ENCODE measurements at regions of chr22 and their contacts with region 1.

Region 1: GRCh38 chr22:46367707-46368191 is 32.2 kb downstream of the TRMU start:
- DNase-seq: peak; percentile 89
- ATAC-seq: peak; percentile 48
- H3K4me3 ChIP-seq: no peak overlapping the region
- H3K4me3 Mint-ChIP-seq: no peak overlapping the region
- H3K27ac ChIP-seq: no peak overlapping the region
- H3K27ac Mint-ChIP-seq: no peak overlapping the region
- H3K4me1 ChIP-seq: peaks cover 4 to 55% of the 10 kb centered on the region in 2 donors
- H3K4me1 Mint-ChIP-seq: peaks cover 15% of the 10 kb centered on the region
- H3K27me3 ChIP-seq: peaks cover 0 to 6% (median 0%) of the 10 kb centered on the region in 4 experiments
- H3K27me3 Mint-ChIP-seq: no peaks in the 10 kb centered on the region
- CTCF ChIP-seq: peak; percentile 93

Region 2: DNA sequence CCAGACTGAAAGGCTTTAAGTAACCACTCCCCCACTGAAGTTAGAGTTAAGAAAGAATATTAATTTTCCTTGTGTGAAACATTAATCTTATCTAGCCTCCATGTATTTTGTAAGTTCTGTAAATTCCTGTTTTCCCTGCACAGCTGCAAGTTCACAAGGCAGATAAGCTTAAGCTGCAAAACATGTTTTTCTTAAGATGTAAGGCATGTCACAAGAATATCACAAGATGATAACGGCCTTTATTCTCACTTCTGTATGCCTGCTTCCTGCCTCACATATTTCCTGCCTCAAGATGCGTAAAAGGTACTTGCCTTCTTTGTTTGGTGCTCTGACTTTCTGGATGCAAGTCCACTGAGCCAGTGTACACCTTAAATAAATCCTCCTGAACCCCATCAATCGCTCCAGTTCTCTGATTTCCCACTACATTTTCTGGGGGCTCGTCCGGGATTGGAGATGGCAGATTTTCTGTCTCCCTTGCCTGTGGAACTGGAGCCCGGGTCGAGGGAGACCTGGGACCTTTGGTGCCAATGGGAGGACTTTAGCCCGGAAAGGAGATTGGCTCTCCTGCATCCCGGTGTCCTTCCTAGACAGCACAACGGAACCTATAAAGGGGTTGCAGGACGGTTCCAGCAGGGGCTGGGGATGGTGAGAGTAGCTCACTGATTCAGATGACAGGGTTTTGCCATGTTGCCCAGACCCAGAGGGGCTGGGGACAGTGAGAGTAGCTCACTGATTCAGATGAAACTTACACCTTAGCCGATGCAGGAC is 187.2 kb before region 1 on chr22:
- CTCF ChIA-PET with region 1: no interaction called
- POLR2A ChIA-PET with region 1: no interaction called
- intact Hi-C with region 1: no loop called
- DNase-seq: no peak
- ATAC-seq: no peak
- H3K4me3 ChIP-seq: no peak overlapping the region
- H3K4me3 Mint-ChIP-seq: no peak overlapping the region
- H3K27ac ChIP-seq: no peak overlapping the region
- H3K27ac Mint-ChIP-seq: no peak overlapping the region
- H3K4me1 ChIP-seq: no peaks in the 10 kb centered on the region
- H3K4me1 Mint-ChIP-seq: no peaks in the 10 kb centered on the region
- H3K27me3 ChIP-seq: no peaks in the 10 kb centered on the region
- H3K27me3 Mint-ChIP-seq: no peaks in the 10 kb centered on the region
- CTCF ChIP-seq: no peak

Region 3: GRCh38 chr22:46355371-46355995 is 12.3 kb before region 1 on chr22:
- CTCF ChIA-PET with region 1: interaction called, 10 read pairs
- POLR2A ChIA-PET with region 1: no interaction called
- intact Hi-C with region 1: no loop called
- DNase-seq: peak; percentile 81
- ATAC-seq: peak; percentile 48
- H3K4me3 ChIP-seq: no peak overlapping the region
- H3K4me3 Mint-ChIP-seq: no peak overlapping the region
- H3K27ac ChIP-seq: no peak overlapping the region
- H3K27ac Mint-ChIP-seq: peak overlapping the region; percentile 65
- H3K4me1 ChIP-seq: peaks cover 0 to 30% of the 10 kb centered on the region in 2 donors
- H3K4me1 Mint-ChIP-seq: peaks cover 10% of the 10 kb centered on the region
- H3K27me3 ChIP-seq: no peaks in the 10 kb centered on the region
- H3K27me3 Mint-ChIP-seq: no peaks in the 10 kb centered on the region
- CTCF ChIP-seq: peak; percentile 87

Region 4: DNA sequence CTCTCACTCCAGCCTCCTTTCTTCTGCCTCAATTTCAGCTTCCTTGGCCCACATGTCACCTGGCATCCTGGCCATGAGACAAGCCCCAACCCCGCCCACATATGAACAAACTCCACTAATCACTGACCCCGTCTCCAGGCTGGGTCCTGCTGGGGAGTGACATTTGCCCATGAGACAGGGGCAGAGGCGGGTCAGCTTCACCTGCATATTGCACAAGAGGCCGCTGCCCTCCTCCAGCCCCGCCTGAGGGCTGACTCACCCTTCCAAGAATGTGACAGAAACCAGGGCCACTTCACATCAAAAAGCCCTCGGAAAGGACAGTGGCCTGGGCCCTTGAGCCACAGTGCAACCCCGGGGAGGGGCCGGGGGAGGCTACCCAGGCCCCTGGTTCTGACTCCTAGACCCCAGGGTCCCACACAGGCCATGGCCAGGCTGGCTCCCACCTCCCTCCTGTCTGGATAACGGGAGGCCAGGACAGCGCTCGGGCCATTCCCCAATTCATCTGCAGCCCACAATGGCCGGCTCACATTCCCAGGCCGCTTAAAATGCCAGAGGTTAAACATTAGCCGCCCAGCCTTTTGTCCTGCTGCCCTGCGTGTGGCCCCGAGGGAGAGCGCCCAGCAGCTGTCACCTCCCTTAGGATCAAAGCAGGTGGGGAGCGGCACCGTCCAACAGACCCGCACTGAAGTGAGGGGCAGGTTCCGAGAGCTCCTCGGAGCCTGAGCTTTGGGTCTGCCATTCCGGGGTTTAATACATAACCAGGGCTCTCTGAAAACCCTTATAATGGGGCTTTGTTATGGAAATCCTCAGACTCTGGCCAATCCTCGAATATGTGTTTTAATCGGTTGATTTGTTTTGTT is 10.0 kb after region 1 on chr22:
- CTCF ChIA-PET with region 1: interaction called, 13 read pairs
- POLR2A ChIA-PET with region 1: no interaction called
- intact Hi-C with region 1: no loop called
- DNase-seq: no peak
- ATAC-seq: no peak
- H3K4me3 ChIP-seq: no peak overlapping the region
- H3K4me3 Mint-ChIP-seq: no peak overlapping the region
- H3K27ac ChIP-seq: no peak overlapping the region
- H3K27ac Mint-ChIP-seq: no peak overlapping the region
- H3K4me1 ChIP-seq: peaks cover 9 to 20% of the 10 kb centered on the region in 2 donors
- H3K4me1 Mint-ChIP-seq: peaks cover 5% of the 10 kb centered on the region
- H3K27me3 ChIP-seq: peaks cover 0 to 6% (median 0%) of the 10 kb centered on the region in 4 experiments
- H3K27me3 Mint-ChIP-seq: no peaks in the 10 kb centered on the region
- CTCF ChIP-seq: no peak

Region 5: GRCh38 chr22:46432164-46433068 is 64.7 kb after region 1 on chr22:
- CTCF ChIA-PET with region 1: interaction called, 5 read pairs
- POLR2A ChIA-PET with region 1: no interaction called
- intact Hi-C with region 1: loop called (anchors 10 kb)
- DNase-seq: peak; percentile 77
- ATAC-seq: peak; percentile 52
- H3K4me3 ChIP-seq: peak overlapping the region; percentile 60 to 99 (median 67)
- H3K4me3 Mint-ChIP-seq: peak overlapping the region; percentile 96
- H3K27ac ChIP-seq: peak overlapping the region; percentile 85 to 87
- H3K27ac Mint-ChIP-seq: peak overlapping the region; percentile 99
- H3K4me1 ChIP-seq: peaks cover 20 to 40% of the 10 kb centered on the region in 2 donors
- H3K4me1 Mint-ChIP-seq: peaks cover 38% of the 10 kb centered on the region
- H3K27me3 ChIP-seq: no peaks in the 10 kb centered on the region
- H3K27me3 Mint-ChIP-seq: no peaks in the 10 kb centered on the region
- CTCF ChIP-seq: no peak

Region 6: GRCh38 chr22:46446799-46447198 is 79.0 kb after region 1 on chr22:
- CTCF ChIA-PET with region 1: no interaction called
- POLR2A ChIA-PET with region 1: no interaction called
- intact Hi-C with region 1: no loop called
- DNase-seq: no peak
- ATAC-seq: no peak
- H3K4me3 ChIP-seq: no peak overlapping the region
- H3K4me3 Mint-ChIP-seq: no peak overlapping the region
- H3K27ac ChIP-seq: no peak overlapping the region
- H3K27ac Mint-ChIP-seq: no peak overlapping the region
- H3K4me1 ChIP-seq: no peaks in the 10 kb centered on the region
- H3K4me1 Mint-ChIP-seq: no peaks in the 10 kb centered on the region
- H3K27me3 ChIP-seq: peaks cover 0 to 2% (median 0%) of the 10 kb centered on the region in 4 experiments
- H3K27me3 Mint-ChIP-seq: peaks cover 11% of the 10 kb centered on the region
- CTCF ChIP-seq: no peak

Region 7: GRCh38 chr22:46533434-46533833 is 165.7 kb after region 1 on chr22:
- CTCF ChIA-PET with region 1: interaction called, 18 read pairs
- POLR2A ChIA-PET with region 1: no interaction called
- intact Hi-C with region 1: no loop called
- DNase-seq: no peak
- ATAC-seq: no peak
- H3K4me3 ChIP-seq: no peak overlapping the region
- H3K4me3 Mint-ChIP-seq: no peak overlapping the region
- H3K27ac ChIP-seq: no peak overlapping the region
- H3K27ac Mint-ChIP-seq: no peak overlapping the region
- H3K4me1 ChIP-seq: peaks cover 7 to 8% of the 10 kb centered on the region in 2 donors
- H3K4me1 Mint-ChIP-seq: peaks cover 4% of the 10 kb centered on the region
- H3K27me3 ChIP-seq: peaks cover 0 to 18% (median 9%) of the 10 kb centered on the region in 4 experiments
- H3K27me3 Mint-ChIP-seq: peaks cover 28% of the 10 kb centered on the region
- CTCF ChIP-seq: no peak

Region 8: DNA sequence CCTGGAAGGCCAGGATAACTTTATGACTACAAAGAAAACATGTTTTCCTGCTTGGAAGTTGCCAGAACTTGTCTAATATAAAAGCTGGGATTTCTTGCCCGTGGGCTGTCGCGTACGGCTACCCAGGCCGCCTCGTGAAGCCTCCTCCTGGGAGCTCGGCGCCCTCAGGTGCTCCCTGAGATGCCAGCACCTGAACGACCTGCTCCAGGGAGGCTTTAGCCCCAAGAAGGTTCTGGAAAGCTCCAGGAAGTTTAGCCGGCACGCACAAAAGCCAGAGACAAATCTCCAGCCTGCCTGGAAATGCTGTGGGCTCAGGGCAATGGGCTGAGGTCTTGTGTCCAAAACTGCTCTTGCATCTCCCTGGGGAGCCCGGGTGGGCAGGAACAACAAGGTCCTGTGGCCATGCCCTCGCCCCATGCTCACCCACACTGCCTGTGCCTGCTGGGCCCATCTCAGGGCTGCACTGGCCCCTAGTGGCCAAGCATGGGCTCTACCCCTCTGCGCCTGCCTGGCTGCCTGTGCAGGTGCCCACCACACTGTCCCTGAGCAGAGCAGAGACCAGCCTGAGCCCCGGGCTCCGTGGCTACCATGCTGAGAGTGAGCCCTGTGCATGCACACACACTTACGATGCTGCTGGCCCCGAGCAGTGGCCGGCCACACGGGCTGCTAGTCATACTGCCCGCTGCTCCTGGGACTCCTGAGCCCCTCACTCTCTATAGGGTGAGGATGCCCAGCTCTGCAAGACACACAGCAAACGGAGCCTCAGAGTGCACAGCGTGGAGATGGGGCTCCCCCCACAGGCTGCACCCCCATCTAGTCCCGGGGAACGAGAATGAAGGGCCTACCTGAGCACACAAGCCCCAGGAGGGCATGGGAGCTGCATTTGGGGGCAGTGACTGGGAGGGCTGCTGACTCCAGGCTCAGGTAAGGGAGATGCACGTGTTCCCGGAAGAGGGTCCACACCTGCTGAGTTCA is 174.5 kb after region 1 on chr22:
- CTCF ChIA-PET with region 1: interaction called, 142 read pairs
- POLR2A ChIA-PET with region 1: interaction called, 8 read pairs
- intact Hi-C with region 1: loop called (anchors 1 kb)
- DNase-seq: peak; percentile 85
- ATAC-seq: peak; percentile 99
- H3K4me3 ChIP-seq: no peak overlapping the region
- H3K4me3 Mint-ChIP-seq: no peak overlapping the region
- H3K27ac ChIP-seq: no peak overlapping the region
- H3K27ac Mint-ChIP-seq: no peak overlapping the region
- H3K4me1 ChIP-seq: peaks cover 11 to 18% of the 10 kb centered on the region in 2 donors
- H3K4me1 Mint-ChIP-seq: peaks cover 14% of the 10 kb centered on the region
- H3K27me3 ChIP-seq: peaks cover 0 to 43% (median 14%) of the 10 kb centered on the region in 4 experiments
- H3K27me3 Mint-ChIP-seq: peaks cover 44% of the 10 kb centered on the region
- CTCF ChIP-seq: peak; percentile 95

Region 9: DNA sequence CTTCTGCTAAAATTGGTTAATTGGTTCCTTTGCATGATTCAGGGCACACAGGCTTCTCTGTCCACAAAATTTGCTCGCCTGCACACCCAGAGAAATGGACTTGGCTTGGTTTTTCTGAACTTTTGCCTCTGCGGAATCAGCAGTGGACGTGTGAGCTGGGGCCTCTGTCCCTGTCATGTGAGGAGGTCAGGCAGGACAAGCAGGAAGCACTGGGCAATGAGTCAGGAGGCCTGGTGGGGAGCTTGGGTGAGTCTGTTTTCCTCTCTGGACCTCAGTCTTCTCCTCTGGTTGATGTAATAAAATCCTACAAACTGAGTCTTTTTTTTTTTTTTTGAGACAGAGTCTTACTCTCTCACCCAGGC is 180.1 kb after region 1 on chr22:
- CTCF ChIA-PET with region 1: interaction called, 142 read pairs
- POLR2A ChIA-PET with region 1: interaction called, 8 read pairs
- intact Hi-C with region 1: no loop called
- DNase-seq: no peak
- ATAC-seq: no peak
- H3K4me3 ChIP-seq: no peak overlapping the region
- H3K4me3 Mint-ChIP-seq: no peak overlapping the region
- H3K27ac ChIP-seq: no peak overlapping the region
- H3K27ac Mint-ChIP-seq: no peak overlapping the region
- H3K4me1 ChIP-seq: no peaks in the 10 kb centered on the region
- H3K4me1 Mint-ChIP-seq: peaks cover 4% of the 10 kb centered on the region
- H3K27me3 ChIP-seq: peaks cover 0 to 21% (median 5%) of the 10 kb centered on the region in 4 experiments
- H3K27me3 Mint-ChIP-seq: peaks cover 27% of the 10 kb centered on the region
- CTCF ChIP-seq: no peak